K562 (cell line): ENCODE measurements at regions of chr6 and their contacts with region 1.

Region 1: GRCh38 chr6:149545754-149546528 is at the start of gene PPIL4:
- DNase-seq: peak; percentile 95 to 98 (median 96)
- ATAC-seq: peak; percentile 90
- H3K4me3 ChIP-seq: peak within 1 kb of the TSS; percentile 97
- H3K27ac ChIP-seq: peak within 1 kb of the TSS; percentile 94
- H3K4me1 ChIP-seq: peaks cover 13 to 14% of the 10 kb centered on the region in 2 experiments; a peak in 4 of 5 replicates
- H3K27me3 ChIP-seq: no peaks in the 10 kb centered on the region
- CTCF ChIP-seq: peak; percentile 71 to 99 (median 84)
- EP300 ChIP-seq: peak; percentile 19; the same call in 1 of the 2 replicates
- POLR2A ChIP-seq: peak; percentile 90
- RAD21 ChIP-seq: peak; percentile 60 to 64
- polyA plus RNA-seq, gene PPIL4: 48.5 to 55.2 TPM

Region 2: GRCh38 chr6:149182262-149182661 is 363.7 kb before region 1 on chr6:
- CTCF ChIA-PET with region 1: no interaction called
- POLR2A ChIA-PET with region 1: no interaction called
- in situ Hi-C with region 1: no loop called
- intact Hi-C with region 1: no loop called
- DNase-seq: no peak
- ATAC-seq: no peak
- H3K4me3 ChIP-seq: no peak overlapping the region
- H3K27ac ChIP-seq: no peak overlapping the region
- H3K4me1 ChIP-seq: no peaks in the 10 kb centered on the region
- H3K27me3 ChIP-seq: no peaks in the 10 kb centered on the region
- CTCF ChIP-seq: no peak
- EP300 ChIP-seq: no peak
- POLR2A ChIP-seq: no peak
- RAD21 ChIP-seq: no peak

Region 3: GRCh38 chr6:149529650-149530049 is 16.3 kb before region 1 on chr6:
- CTCF ChIA-PET with region 1: no interaction called
- POLR2A ChIA-PET with region 1: interaction called, 25 read pairs
- in situ Hi-C with region 1: no loop called
- intact Hi-C with region 1: no loop called
- DNase-seq: no peak
- ATAC-seq: no peak
- H3K4me3 ChIP-seq: no peak overlapping the region
- H3K27ac ChIP-seq: no peak overlapping the region
- H3K4me1 ChIP-seq: no peaks in the 10 kb centered on the region
- H3K27me3 ChIP-seq: no peaks in the 10 kb centered on the region
- CTCF ChIP-seq: no peak
- EP300 ChIP-seq: no peak
- POLR2A ChIP-seq: no peak
- RAD21 ChIP-seq: no peak

Region 4: GRCh38 chr6:149648148-149649145 is 102.5 kb after region 1 on chr6 and contains the start of gene KATNA1:
- CTCF ChIA-PET with region 1: no interaction called
- POLR2A ChIA-PET with region 1: interaction called, 3 read pairs
- in situ Hi-C with region 1: no loop called
- intact Hi-C with region 1: loop called (anchors 2 kb)
- DNase-seq: peak; percentile 99
- ATAC-seq: peak; percentile 96
- H3K4me3 ChIP-seq: peak within 1 kb of the TSS; percentile 78
- H3K27ac ChIP-seq: peak within 1 kb of the TSS; percentile 95
- H3K4me1 ChIP-seq: peaks cover 8 to 16% of the 10 kb centered on the region in 2 experiments; a peak in 4 of 5 replicates
- H3K27me3 ChIP-seq: no peaks in the 10 kb centered on the region
- CTCF ChIP-seq: peak; percentile 22 to 46 (median 33); a peak in 3 of 6 replicates
- EP300 ChIP-seq: peak; percentile 55
- POLR2A ChIP-seq: peak; percentile 94
- RAD21 ChIP-seq: peak in 1 of 2 experiments; percentile 25; a peak in 1 of 4 replicates
- polyA plus RNA-seq, gene KATNA1: 22.5 to 33.3 TPM